Right cardiac atrium (tissue), 5 donors: ENCODE measurements at regions of chr20 and their contacts with region 1.

Region 1: GRCh38 chr20:9235518-9235917 is 166.6 kb downstream of the PLCB4 start:
- DNase-seq: no peak
- ATAC-seq: no peak
- H3K4me3 ChIP-seq: no peak overlapping the region
- H3K27ac ChIP-seq: no peak overlapping the region
- H3K4me1 ChIP-seq: no peaks in the 10 kb centered on the region
- H3K27me3 ChIP-seq: no peaks in the 10 kb centered on the region

Region 2: DNA sequence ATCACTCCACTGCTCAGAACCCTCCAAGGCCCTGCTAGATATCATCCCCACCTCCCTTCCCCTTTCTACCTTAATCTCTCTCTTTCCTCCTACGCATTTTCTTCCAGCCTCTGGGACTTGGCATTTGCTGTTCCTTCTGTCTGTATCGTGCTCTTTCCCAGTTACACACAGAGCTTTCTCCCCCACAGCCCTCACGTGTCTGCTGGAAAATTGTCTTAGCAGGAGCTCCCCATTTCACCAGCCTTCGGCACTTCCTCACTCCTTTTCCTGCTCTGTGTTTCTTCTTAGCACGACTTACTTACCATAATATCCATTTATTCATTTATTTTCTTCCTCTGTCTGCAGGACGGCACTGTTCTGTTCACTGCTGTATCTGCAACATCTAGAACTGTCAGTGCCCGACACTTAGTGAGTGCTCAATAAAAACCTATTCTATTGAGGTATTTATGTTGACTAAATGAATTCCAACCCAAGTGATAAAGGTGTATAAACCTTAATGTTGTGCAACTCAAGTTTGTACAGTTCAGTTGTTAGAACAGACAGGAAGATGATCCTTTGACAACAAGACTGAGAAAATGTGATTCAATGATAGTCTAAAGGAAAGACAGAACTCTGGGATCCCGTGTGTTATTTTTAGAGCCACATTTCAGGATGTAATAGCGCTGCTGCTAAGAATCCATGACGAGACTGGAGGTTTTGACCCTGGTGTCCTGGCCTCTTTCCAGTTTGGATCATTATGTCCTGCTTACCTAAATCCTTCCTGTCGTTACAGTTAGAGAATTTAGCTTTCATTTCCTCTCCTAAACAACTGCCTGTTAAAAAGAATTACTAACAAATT is 108.8 kb after region 1 on chr20:
- intact Hi-C with region 1: loop called in 1 of 4 experiments (anchors 10 kb)
- DNase-seq: no peak
- ATAC-seq: peak; percentile 64 to 66
- H3K4me3 ChIP-seq: no peak overlapping the region
- H3K27ac ChIP-seq: peak overlapping the region; percentile 3
- H3K4me1 ChIP-seq: no peaks in the 10 kb centered on the region
- H3K27me3 ChIP-seq: no peaks in the 10 kb centered on the region